ENCODE measurements at regions of chr17 and their contacts with region 1.

Region 1: DNA sequence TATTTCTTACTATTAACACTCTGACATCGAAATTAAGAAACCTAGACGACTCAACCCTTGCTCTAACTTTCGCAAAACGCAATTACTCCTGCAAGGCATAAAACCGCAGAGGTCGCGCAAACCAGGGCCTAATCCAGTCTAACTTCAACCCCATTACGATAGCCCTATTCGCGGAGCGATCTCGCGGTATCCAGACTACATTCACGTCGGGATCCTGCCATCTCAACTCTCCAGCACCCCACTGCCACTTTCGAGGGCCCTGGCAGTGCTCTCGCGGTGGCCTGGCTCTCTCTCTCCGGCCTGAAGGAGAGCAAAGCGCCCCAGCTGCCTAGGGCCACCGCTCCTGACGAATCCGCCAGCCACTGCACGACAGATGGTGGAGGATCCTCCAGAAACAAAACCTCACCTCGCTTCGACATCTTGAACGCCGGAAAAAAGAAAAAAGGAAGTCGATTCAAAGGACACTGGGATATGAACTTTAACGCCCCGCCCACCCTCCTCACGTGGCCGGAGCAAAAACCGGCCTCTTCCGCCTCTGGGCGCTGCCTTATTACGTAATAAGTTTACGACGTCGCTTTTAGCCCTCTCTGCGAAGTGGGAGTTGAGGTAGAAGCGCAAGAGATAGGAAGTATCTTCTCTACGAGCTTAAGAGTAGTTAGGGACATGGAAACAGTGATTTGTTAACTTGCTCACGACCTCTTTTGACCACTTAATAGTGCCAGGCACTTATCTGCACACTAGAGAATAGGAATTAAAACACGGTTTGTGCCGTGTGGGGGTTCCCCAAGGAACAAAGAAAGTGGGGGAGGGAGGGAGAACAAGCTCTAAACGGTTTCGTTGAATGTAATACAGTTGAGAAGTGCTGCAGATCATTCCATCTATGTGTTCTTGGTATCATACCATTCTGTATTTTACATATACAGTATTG is at the start of gene RPL23:
- DNase-seq: peak; percentile 74 to 95 (median 89)
- ATAC-seq: peak; percentile 80 to 82
- H3K4me3 Mint-ChIP-seq: peak within 1 kb of the TSS; percentile 94 to 99 (median 96)
- H3K27ac Mint-ChIP-seq: peak within 1 kb of the TSS; percentile 98 to 100 (median 99)
- H3K4me1 Mint-ChIP-seq: peaks cover 29 to 47% (median 44%) of the 10 kb centered on the region in 4 donors
- H3K27me3 Mint-ChIP-seq: no peaks in the 10 kb centered on the region
- polyA plus RNA-seq, gene RPL23: 1,506 to 1,897 (median 1,688) TPM

Region 2: DNA sequence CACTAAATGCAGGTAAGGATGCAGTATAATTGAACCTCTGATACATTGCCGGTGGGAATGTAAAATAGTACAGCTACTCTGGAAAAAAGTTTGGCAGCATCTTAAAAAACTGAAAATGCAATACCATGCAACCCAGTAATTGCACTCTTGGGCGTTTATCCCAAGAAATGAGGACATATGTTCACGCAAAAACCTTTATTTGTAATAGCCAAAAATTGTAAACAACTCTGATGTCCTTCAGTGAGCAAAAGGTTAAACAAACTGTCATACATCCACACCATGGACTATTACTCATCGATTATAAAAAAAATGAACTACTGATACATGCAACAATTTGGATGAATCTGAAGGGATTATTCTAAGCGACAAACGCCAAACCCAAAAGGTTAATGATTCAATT is 1261.3 kb before region 1 on chr17:
- POLR2A ChIA-PET with region 1: no interaction called
- DNase-seq: no peak
- ATAC-seq: no peak
- H3K4me3 Mint-ChIP-seq: peak overlapping the region in 6 of 10 donors; percentile 5 to 53 (median 42)
- H3K27ac Mint-ChIP-seq: peak overlapping the region in 5 of 10 donors; percentile 13 to 82 (median 44)
- H3K4me1 Mint-ChIP-seq: peaks cover 21 to 81% (median 69%) of the 10 kb centered on the region in 4 donors
- H3K27me3 Mint-ChIP-seq: no peaks in the 10 kb centered on the region

Region 3: DNA sequence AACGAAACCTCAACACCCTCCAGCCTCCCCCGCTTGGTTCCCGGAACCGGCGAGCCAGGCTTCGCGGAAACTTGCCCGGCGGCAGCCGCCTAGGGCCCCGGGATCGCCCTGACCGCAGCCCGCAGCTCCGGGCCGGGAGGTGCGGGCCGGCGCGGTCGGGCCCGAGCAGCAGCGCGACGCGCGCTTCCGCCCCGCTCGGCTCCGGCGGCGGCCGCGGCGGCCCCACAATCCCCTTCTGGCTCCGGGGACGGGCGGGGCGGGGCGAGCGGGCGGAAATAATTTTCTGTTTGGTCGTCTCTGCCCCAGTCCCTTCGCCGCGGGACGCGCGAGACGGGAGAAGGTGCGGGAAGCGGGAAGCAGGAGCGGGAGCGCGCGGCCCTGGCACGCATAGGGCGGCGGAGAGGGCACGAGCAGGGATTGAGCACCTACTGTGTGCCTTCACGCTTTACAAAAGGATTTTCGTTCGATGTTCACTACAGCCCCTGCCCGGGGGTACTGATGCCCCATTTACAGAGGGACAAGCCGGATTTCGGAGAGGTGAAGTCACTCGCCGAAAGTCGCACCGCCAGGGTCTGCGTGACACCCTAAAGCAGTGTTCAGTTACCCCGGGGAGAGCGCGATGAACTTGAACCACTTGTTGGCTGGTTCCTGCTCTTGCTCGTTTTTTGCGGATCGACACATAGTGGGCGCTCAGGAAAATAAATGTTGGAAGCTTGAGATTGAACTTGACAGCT is 151.2 kb before region 1 on chr17:
- POLR2A ChIA-PET with region 1: interaction called, 11 read pairs
- DNase-seq: peak; percentile 57 to 84 (median 74)
- ATAC-seq: peak; percentile 41 to 48
- H3K4me3 Mint-ChIP-seq: peak overlapping the region; percentile 92 to 99 (median 98)
- H3K27ac Mint-ChIP-seq: peak overlapping the region; percentile 92 to 99 (median 97)
- H3K4me1 Mint-ChIP-seq: peaks cover 31 to 50% (median 47%) of the 10 kb centered on the region in 4 donors
- H3K27me3 Mint-ChIP-seq: peaks cover 0 to 2% (median 0%) of the 10 kb centered on the region in 5 donors

Region 4: DNA sequence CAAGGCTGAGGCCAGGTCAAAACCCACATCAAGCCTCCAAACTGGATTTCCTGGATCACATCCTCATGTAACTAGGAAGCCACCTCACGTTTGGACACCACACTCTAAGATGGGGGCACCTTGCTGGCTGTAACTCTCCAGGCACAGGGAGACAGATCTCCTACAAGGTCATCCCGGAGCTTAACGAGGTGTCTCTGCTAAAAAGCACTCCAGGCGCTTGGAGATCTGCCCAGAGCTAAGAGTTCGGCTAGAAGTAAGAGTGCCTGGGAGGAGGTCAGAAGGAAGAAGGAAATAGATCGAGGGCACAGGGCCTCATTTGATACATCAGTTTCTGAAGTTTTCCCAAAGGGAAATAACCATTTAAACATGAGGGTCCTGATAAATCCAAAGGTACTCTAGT is 85.1 kb before region 1 on chr17:
- POLR2A ChIA-PET with region 1: no interaction called
- DNase-seq: no peak
- ATAC-seq: no peak
- H3K4me3 Mint-ChIP-seq: no peak overlapping the region
- H3K27ac Mint-ChIP-seq: peak overlapping the region in 2 of 10 donors; percentile 11 to 55
- H3K4me1 Mint-ChIP-seq: peaks cover 1 to 15% (median 8%) of the 10 kb centered on the region in 4 donors
- H3K27me3 Mint-ChIP-seq: no peaks in the 10 kb centered on the region

Region 5: GRCh38 chr17:38824899-38825761 is 28.4 kb before region 1 on chr17 and contains the start of gene CWC25:
- POLR2A ChIA-PET with region 1: interaction called, 60 read pairs
- DNase-seq: peak; percentile 84 to 100 (median 96)
- ATAC-seq: peak; percentile 81 to 86
- H3K4me3 Mint-ChIP-seq: peak within 1 kb of the TSS; percentile 93 to 99 (median 97)
- H3K27ac Mint-ChIP-seq: peak within 1 kb of the TSS; percentile 97 to 100 (median 100)
- H3K4me1 Mint-ChIP-seq: peaks cover 24 to 44% (median 37%) of the 10 kb centered on the region in 4 donors
- H3K27me3 Mint-ChIP-seq: peaks cover 0 to 6% (median 0%) of the 10 kb centered on the region in 5 donors
- polyA plus RNA-seq, gene CWC25: 6.3 to 7.4 (median 6.4) TPM

Region 6: DNA sequence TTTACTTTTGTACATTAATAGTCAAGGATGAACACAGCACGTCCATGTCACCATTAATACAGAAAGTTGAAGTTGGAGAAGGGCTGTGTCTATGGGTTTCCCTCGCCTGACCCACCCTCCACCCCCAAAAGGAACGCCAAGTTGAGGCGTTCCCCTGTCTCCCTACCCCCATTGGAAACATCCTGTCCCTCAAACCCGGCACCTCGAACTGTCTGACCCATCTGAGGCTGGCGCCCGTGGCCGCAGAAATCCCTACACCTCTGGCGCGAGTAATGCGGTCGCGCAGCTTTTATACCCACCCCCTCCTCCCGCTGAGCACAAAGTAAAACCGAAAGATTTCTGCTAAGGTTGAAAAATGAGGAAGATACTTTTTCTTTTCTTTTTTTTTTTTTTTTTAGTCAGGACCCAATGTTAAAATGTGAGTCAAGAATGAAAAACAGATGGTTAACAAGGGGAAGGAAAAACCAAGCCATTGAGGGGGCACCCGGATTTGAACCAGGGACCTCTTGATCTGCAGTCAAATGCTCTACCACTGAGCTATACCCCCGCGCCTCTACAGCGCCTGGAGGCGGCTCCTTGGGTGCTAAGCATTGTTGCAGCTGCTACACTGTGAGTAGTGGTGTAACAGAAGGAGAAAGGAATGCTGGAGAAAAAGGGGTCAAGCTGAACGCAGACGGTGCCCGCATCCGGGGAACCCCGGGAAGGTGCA is 15.4 kb after region 1 on chr17:
- POLR2A ChIA-PET with region 1: interaction called, 161 read pairs
- DNase-seq: peak; percentile 69 to 93 (median 90)
- ATAC-seq: peak; percentile 52 to 70
- H3K4me3 Mint-ChIP-seq: peak overlapping the region; percentile 94 to 100 (median 98)
- H3K27ac Mint-ChIP-seq: peak overlapping the region; percentile 92 to 100 (median 96)
- H3K4me1 Mint-ChIP-seq: peaks cover 34 to 55% (median 47%) of the 10 kb centered on the region in 4 donors
- H3K27me3 Mint-ChIP-seq: peaks cover 0 to 1% (median 0%) of the 10 kb centered on the region in 5 donors

Region 7: DNA sequence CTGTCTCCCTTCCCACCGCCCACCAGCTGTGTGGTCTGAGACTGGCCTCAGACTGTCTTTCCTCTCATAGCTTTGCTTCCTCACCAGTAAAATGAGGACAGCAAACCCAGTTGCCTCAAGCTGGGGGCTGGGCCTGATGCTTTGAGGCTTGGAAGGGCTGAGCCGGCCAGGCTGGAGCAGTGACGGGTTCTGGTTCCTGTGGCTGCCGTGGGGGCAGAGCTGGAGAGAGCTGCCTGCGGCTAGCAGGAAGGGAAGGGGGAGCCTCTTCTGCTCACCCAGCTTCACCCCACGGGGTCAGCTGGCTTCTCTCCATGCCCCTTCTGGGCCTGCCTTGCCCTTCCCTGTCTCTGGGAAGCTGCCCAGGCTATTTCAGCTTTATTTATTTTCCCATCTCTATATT is 40.1 kb after region 1 on chr17:
- POLR2A ChIA-PET with region 1: interaction called, 40 read pairs
- DNase-seq: peak in 1 of 10 donors; percentile 44
- ATAC-seq: peak in 1 of 2 donors; percentile 18
- H3K4me3 Mint-ChIP-seq: peak overlapping the region in 7 of 10 donors; percentile 7 to 75 (median 55)
- H3K27ac Mint-ChIP-seq: peak overlapping the region; percentile 66 to 99 (median 92)
- H3K4me1 Mint-ChIP-seq: peaks cover 34 to 90% (median 85%) of the 10 kb centered on the region in 4 donors
- H3K27me3 Mint-ChIP-seq: no peaks in the 10 kb centered on the region

Region 8: DNA sequence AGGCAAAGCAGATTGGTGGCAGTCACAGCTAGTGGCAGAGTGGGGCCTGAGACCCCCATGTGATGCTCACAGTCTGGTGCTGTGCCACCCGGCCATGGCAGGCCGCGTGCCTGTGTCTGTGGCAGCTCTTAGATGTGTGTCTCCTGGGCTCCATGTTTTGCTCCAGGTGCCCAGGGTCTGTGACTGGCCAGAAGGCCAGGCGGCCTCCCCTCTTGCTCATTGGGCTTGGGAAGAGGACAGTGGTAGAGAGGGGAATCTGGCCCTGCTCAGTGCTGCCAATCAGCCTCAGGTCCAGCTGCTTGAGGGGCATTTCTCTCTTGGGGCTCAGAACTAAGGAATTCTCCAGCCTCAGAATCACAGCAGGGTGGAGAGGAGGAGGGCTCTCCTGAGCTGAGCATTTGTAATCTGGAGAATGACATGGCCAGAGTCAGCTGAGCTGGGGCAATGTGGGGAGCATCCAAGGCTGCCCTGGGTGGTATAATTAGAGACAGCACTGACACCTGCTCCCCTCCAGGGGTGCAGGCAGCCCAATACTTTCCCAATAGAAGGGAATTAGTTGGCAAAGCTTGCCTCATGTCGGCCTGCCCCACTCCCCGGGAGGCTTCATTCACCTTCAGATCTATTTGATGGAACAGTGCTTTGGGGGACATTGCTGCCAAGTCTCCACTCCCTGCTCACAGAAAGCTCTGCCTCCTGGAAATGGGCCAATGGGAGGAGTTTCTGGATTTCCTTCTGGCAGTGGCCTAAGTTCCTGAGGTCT is 69.2 kb after region 1 on chr17:
- POLR2A ChIA-PET with region 1: interaction called, 28 read pairs
- DNase-seq: no peak
- ATAC-seq: no peak
- H3K4me3 Mint-ChIP-seq: no peak overlapping the region
- H3K27ac Mint-ChIP-seq: peak overlapping the region in 8 of 10 donors; percentile 8 to 92 (median 71)
- H3K4me1 Mint-ChIP-seq: peaks cover 30 to 47% (median 40%) of the 10 kb centered on the region in 4 donors
- H3K27me3 Mint-ChIP-seq: no peaks in the 10 kb centered on the region

Region 9: DNA sequence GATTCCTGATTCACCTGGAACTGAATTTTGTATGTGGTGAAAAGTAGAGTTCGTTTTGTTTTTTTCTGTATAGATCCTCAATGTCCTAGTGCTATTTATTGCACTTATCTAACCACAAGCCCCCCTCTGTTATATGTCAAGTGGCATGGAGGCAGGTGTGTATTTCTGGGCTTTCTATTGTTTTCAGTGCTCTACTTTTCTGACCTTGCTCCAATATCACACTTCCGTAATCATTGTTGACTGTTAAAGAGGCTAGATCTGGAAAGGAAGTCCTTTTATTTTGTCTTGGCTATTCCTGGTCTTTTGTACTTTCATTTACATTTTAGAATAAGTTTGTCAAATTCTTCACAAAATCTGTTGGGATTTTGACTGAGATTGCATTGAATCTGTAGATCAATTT is 140.5 kb after region 1 on chr17:
- POLR2A ChIA-PET with region 1: no interaction called
- DNase-seq: no peak
- ATAC-seq: no peak
- H3K4me3 Mint-ChIP-seq: no peak overlapping the region
- H3K27ac Mint-ChIP-seq: no peak overlapping the region
- H3K4me1 Mint-ChIP-seq: no peaks in the 10 kb centered on the region
- H3K27me3 Mint-ChIP-seq: no peaks in the 10 kb centered on the region

Region 10: GRCh38 chr17:39473310-39473709 is 619.8 kb after region 1 on chr17:
- POLR2A ChIA-PET with region 1: no interaction called
- DNase-seq: no peak
- ATAC-seq: no peak
- H3K4me3 Mint-ChIP-seq: no peak overlapping the region
- H3K27ac Mint-ChIP-seq: no peak overlapping the region
- H3K4me1 Mint-ChIP-seq: peaks cover 8 to 19% (median 12%) of the 10 kb centered on the region in 4 donors
- H3K27me3 Mint-ChIP-seq: no peaks in the 10 kb centered on the region